Prostate gland (tissue), 2 donors: ENCODE measurements at regions of chr9 and their contacts with region 1.

Region 1: DNA sequence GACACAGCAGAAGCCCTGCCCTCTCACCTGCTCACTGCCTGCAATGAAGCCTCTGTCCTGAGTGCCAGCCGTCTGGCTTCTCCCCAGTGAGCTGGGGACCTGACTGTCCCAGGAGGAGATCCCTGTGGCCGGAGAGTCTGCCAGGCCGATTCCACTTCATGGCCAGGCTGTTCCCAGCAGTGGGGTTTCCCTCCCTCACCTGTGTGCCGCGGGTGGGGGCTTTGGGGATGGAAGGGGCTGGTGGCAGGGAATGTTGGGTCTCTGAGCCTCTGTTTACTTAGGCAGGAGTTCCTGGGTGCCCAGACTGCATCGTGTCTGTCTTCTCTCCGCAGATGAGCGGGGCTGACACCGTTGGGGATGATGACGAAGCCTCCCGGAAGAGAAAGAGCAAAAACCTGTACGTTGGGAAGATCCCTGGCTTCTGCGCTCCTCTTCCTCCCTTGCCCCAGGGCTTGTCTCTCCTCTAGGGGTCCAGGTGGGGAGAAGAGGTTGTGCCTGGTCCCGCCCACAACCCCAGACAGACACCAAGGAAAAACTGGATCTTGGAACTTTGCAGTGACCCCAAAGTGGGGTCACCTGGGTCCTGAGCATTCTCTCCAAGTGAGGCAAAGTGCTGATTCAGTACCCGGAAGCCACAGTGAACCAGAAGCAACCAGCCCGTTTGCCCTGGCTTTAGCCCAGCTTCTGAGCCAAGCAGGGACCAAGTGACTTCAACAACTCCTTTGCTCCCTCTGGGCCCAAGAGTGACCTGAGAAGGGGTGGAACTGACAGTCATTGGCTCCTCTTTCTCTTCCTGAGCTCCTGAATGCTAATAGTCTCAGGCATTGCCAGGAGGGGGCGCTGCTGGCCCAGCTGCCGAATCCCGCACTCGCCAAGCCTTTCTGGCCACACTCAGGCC is 127.7 kb downstream of the RGS3 start:
- DNase-seq: peak; percentile 75
- H3K4me3 ChIP-seq: no peak overlapping the region
- H3K27ac ChIP-seq: peak overlapping the region; percentile 24 to 28
- H3K4me1 ChIP-seq: peaks cover 24% of the 10 kb centered on the region
- H3K27me3 ChIP-seq: no peaks in the 10 kb centered on the region
- CTCF ChIP-seq: peak; percentile 68 to 88 (median 86)
- POLR2A ChIP-seq: no peak

Region 2: DNA sequence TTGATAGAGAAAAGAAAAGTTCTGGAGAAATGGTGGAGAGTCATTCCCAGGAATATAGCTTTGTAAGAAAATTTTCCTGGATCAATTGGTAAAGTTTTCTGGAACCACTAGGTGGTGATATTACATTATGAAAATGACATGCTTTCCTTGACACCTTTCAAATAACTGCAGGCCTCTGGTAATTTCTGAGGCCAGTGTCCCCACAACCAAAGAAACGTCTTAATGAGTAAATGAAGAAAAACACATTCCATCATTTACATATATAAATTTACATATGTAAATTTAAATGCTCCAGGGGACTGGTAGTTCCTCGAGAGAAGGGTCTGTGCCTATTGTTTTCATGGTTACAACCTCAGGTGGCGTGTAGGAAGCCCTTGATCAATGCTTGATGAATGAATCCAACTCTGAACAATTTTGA is 144.9 kb before region 1 on chr9:
- intact Hi-C with region 1: loop called (anchors 2 kb)
- DNase-seq: no peak
- H3K4me3 ChIP-seq: no peak overlapping the region
- H3K27ac ChIP-seq: no peak overlapping the region
- H3K4me1 ChIP-seq: no peaks in the 10 kb centered on the region
- H3K27me3 ChIP-seq: no peaks in the 10 kb centered on the region
- CTCF ChIP-seq: peak; percentile 27 to 80 (median 77)
- POLR2A ChIP-seq: no peak

Region 3: GRCh38 chr9:113657703-113658544 is 66.7 kb after region 1 on chr9:
- intact Hi-C with region 1: loop called (anchors 1 kb)
- DNase-seq: peak; percentile 84
- H3K4me3 ChIP-seq: no peak overlapping the region
- H3K27ac ChIP-seq: no peak overlapping the region
- H3K4me1 ChIP-seq: no peaks in the 10 kb centered on the region
- H3K27me3 ChIP-seq: no peaks in the 10 kb centered on the region
- CTCF ChIP-seq: peak; percentile 72 to 95 (median 94)
- POLR2A ChIP-seq: no peak